Posterior vena cava (tissue), 2 donors: ENCODE measurements at regions of chr11 and their contacts with region 1.

Region 1: GRCh38 chr11:10095412-10096207 is 198.4 kb downstream of the SBF2 start:
- DNase-seq: no peak

Region 2: DNA sequence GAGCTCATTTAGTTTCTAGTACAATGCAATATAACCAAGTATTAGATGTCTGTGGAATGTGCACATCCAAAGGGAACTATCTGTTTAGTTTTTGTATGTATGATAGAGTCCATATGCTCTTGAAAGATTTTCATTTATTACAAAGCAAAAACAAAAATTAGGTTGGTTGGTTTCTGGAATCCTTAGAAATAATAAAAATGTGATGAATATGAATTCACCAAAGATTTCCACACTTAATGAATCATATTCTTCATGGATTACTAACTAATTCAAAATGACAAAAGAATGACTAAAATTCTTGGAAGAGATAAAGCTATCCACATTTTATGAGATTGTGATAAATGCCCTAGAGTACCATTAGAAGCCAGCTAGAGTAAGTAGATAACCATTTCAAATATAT is 62.7 kb before region 1 on chr11:
- intact Hi-C with region 1: loop called in 1 of 2 experiments (anchors 2 kb)
- DNase-seq: no peak

Region 3: GRCh38 chr11:10058356-10058755 is 37.3 kb before region 1 on chr11:
- intact Hi-C with region 1: no loop called
- DNase-seq: no peak

Region 4: GRCh38 chr11:10164621-10165020 is 69.0 kb after region 1 on chr11:
- intact Hi-C with region 1: no loop called
- DNase-seq: no peak